ENCODE measurements at regions of chrX and their contacts with region 1.

Region 1: DNA sequence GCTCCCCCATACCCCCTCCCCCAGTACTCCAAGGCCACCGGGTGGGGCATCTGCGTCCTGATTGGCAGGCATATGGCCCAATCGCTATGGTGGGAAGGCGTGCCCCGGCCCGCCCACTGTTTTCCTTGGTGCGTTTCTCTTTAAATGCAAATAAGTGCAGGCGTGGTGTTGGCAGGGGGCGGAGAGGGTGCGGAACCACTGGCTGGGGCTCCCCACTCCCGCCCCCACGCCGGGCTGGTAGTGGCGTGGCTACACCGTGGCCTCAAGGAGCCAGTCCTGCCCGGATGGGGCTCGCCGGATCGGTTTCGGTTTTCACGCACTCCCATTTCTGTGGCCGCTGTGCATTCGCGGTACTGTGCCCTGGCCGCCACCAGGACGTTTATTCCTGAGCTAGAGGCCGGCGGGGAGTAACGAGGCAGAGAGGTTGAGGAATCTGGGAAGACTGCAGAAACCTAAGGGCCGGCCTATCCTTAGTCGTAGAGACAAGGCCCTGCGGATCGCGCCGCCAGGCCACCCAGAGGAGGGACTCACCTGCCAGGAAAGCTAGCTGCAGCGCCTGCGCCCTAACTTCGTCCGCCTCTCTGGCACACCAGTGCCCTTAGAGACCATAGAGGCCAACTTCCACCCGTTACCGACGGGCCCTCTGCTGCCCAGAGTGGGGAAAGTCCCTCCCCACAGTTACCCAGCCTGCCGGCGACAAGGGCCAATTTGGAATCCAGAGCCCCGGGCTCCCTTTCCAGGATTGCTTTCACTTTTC is 405 bp upstream of the AMER1 start:
- DNase-seq: peak; percentile 92 to 94
- H3K4me3 ChIP-seq: peak overlapping the region; percentile 52
- H3K4me3 Mint-ChIP-seq: peak overlapping the region; percentile 76
- H3K27ac Mint-ChIP-seq: peak overlapping the region; percentile 79
- H3K4me1 ChIP-seq: no peaks in the 10 kb centered on the region
- H3K4me1 Mint-ChIP-seq: no peaks in the 10 kb centered on the region
- H3K27me3 ChIP-seq: no peaks in the 10 kb centered on the region
- H3K27me3 Mint-ChIP-seq: no peaks in the 10 kb centered on the region
- CTCF ChIP-seq: peak in 1 of 2 experiments; percentile 29

Region 2: DNA sequence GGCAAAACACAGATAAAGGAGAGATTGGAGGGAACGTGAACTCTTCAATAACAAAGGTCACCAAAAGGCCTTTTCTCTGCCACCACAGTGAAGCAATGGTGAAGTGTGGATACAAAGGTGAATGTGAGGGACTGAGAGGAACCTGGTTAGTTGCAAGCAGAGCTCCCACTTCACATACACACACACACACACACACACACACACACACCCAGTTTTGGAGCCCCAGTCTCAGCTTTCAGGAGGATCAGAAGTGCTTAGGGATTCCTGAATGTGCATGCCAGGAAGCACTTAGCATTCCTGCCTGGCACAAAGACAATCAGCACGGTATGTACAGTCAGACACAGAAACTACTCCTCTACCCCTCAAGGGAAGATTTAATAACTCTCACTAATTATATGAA is 492.4 kb before region 1 on chrX:
- CTCF ChIA-PET with region 1: no interaction called
- POLR2A ChIA-PET with region 1: no interaction called
- intact Hi-C with region 1: no loop called
- DNase-seq: no peak
- H3K4me3 ChIP-seq: no peak overlapping the region
- H3K4me3 Mint-ChIP-seq: no peak overlapping the region
- H3K27ac Mint-ChIP-seq: no peak overlapping the region
- H3K4me1 ChIP-seq: no peaks in the 10 kb centered on the region
- H3K4me1 Mint-ChIP-seq: no peaks in the 10 kb centered on the region
- H3K27me3 ChIP-seq: no peaks in the 10 kb centered on the region
- H3K27me3 Mint-ChIP-seq: no peaks in the 10 kb centered on the region
- CTCF ChIP-seq: no peak

Region 3: DNA sequence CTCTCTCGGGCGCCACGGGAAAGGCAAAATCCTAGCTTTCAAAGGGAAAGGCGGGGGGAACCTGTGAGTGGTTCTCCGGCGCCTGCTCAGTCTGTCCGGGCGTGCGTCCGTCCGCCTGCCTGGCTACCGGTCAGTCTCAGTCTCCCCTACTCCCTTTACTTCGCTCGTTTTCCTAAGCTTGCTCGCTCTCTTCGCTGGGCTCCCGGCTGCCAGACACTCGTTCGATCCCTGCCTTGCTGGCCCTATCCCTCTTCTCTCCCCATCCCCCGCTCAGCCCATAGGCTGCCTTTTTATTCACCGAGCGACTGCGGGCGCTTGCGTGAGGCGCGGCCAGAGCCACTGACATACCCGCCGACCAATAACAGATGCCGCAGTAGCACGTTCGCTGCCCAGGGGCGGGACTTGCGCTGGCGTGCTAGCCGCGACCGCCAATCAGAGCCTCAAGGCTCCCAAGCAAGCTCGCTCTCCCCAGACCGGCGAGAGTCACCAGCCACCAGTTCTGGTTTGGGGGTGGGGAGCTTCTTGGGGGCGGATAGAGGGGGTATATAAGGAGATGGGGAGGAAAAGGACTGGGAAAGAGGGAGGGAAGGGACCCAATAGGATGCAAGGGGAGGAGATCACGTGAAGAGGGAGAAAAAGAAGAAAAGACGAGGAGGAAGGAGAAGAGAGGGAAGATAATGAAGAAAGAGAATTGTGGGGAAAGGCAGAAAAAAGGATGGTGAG is 450.9 kb before region 1 on chrX:
- CTCF ChIA-PET with region 1: interaction called, 3 read pairs
- POLR2A ChIA-PET with region 1: no interaction called
- intact Hi-C with region 1: loop called (anchors 1 kb)
- DNase-seq: peak; percentile 88 to 91
- H3K4me3 ChIP-seq: peak overlapping the region; percentile 70
- H3K4me3 Mint-ChIP-seq: peak overlapping the region; percentile 90
- H3K27ac Mint-ChIP-seq: peak overlapping the region; percentile 89
- H3K4me1 ChIP-seq: no peaks in the 10 kb centered on the region
- H3K4me1 Mint-ChIP-seq: peaks cover 6% of the 10 kb centered on the region
- H3K27me3 ChIP-seq: no peaks in the 10 kb centered on the region
- H3K27me3 Mint-ChIP-seq: peaks cover 8% of the 10 kb centered on the region
- CTCF ChIP-seq: no peak

Region 4: DNA sequence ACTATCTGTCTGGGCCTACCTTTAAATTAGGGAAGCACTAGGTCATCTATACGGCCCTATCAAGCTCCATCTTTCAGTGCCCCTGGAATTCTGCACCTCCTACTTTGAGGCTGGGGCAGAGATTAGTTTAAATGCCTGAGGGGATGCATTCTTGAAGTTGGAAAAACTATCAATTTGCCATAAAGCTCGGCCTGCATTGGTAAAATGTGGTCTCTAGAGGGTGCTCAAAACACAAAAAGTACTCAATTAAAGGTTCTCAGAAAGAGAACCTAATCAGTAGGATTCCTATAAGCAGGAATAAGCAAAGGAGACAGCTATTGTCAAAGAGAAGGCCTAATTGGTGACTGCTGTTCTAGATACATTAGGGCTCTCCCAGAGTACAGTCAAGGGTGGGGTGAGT is 112.2 kb before region 1 on chrX:
- CTCF ChIA-PET with region 1: interaction called, 12 read pairs
- POLR2A ChIA-PET with region 1: no interaction called
- intact Hi-C with region 1: loop called (anchors 1 kb)
- DNase-seq: peak in 1 of 2 experiments; percentile 14
- H3K4me3 ChIP-seq: no peak overlapping the region
- H3K4me3 Mint-ChIP-seq: no peak overlapping the region
- H3K27ac Mint-ChIP-seq: no peak overlapping the region
- H3K4me1 ChIP-seq: no peaks in the 10 kb centered on the region
- H3K4me1 Mint-ChIP-seq: no peaks in the 10 kb centered on the region
- H3K27me3 ChIP-seq: no peaks in the 10 kb centered on the region
- H3K27me3 Mint-ChIP-seq: no peaks in the 10 kb centered on the region
- CTCF ChIP-seq: peak; percentile 29 to 45

Region 5: DNA sequence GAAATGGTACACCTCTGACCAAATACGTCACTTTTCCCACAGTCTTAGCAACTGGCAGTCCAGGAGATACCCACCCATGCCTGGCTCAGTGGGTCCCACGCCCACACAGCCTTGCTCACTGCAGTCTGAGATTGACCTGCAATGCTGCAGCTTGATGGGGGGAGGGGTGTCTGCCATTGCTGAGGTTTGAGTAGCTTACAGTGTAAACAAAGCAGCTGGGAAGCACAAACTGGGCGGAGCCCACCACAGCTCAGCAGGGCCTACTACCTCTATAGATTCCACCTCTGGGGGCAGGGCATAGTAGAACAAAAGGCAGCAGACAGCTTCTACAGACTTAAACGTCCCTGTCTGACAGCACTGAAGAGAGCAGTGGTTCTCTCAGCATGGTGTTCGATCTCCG is 53.1 kb before region 1 on chrX:
- CTCF ChIA-PET with region 1: no interaction called
- POLR2A ChIA-PET with region 1: no interaction called
- intact Hi-C with region 1: loop called (anchors 10 kb)
- DNase-seq: peak; percentile 1 to 36
- H3K4me3 ChIP-seq: no peak overlapping the region
- H3K4me3 Mint-ChIP-seq: no peak overlapping the region
- H3K27ac Mint-ChIP-seq: no peak overlapping the region
- H3K4me1 ChIP-seq: no peaks in the 10 kb centered on the region
- H3K4me1 Mint-ChIP-seq: no peaks in the 10 kb centered on the region
- H3K27me3 ChIP-seq: no peaks in the 10 kb centered on the region
- H3K27me3 Mint-ChIP-seq: no peaks in the 10 kb centered on the region
- CTCF ChIP-seq: no peak

Region 6: DNA sequence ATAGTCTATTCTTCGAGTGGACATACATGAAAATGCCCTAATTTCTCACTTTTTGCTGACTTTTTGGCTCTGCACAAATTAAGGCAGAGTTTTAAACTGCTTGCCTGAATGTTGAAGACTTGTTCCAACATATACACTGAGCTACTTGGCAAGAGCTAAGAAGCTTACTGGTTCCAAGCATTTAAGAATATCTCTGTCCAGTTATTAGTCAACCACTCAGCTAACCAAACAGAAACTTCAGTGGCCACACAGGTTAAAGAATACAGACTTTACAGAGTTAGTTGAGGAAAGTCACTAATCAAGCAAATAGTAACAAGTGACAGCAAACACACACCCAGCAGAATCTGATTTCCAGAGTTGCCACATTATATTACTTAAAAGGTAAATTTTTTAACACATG is 35.9 kb before region 1 on chrX:
- CTCF ChIA-PET with region 1: no interaction called
- POLR2A ChIA-PET with region 1: no interaction called
- intact Hi-C with region 1: loop called (anchors 5 kb)
- DNase-seq: no peak
- H3K4me3 ChIP-seq: no peak overlapping the region
- H3K4me3 Mint-ChIP-seq: no peak overlapping the region
- H3K27ac Mint-ChIP-seq: no peak overlapping the region
- H3K4me1 ChIP-seq: no peaks in the 10 kb centered on the region
- H3K4me1 Mint-ChIP-seq: no peaks in the 10 kb centered on the region
- H3K27me3 ChIP-seq: no peaks in the 10 kb centered on the region
- H3K27me3 Mint-ChIP-seq: no peaks in the 10 kb centered on the region
- CTCF ChIP-seq: no peak

Region 7: GRCh38 chrX:64186974-64187761 is 18.7 kb before region 1 on chrX:
- CTCF ChIA-PET with region 1: interaction called, 6 read pairs
- POLR2A ChIA-PET with region 1: interaction called, 7 read pairs
- intact Hi-C with region 1: loop called (anchors 1 kb)
- DNase-seq: no peak
- H3K4me3 ChIP-seq: no peak overlapping the region
- H3K4me3 Mint-ChIP-seq: no peak overlapping the region
- H3K27ac Mint-ChIP-seq: no peak overlapping the region
- H3K4me1 ChIP-seq: peaks cover 7% of the 10 kb centered on the region
- H3K4me1 Mint-ChIP-seq: no peaks in the 10 kb centered on the region
- H3K27me3 ChIP-seq: no peaks in the 10 kb centered on the region
- H3K27me3 Mint-ChIP-seq: no peaks in the 10 kb centered on the region
- CTCF ChIP-seq: no peak

Region 8: DNA sequence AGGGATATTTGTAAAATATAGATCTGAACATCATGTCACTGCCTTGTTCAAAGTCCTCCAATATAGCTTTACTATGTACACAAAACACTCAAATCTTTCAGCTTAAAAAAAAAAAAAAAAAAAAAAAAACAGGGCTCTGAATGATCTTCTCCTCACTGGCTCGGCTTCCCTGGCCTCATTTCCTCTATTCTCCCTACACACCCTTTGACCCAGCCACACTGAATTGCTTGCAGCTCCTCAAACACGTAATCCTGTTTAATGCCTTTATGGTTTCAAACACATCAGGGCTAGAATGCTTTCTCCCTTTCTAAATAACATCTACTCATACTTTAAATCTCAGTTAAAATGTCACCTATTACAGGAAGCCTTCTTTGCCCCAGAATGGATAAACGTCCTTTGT is 128.6 kb after region 1 on chrX:
- CTCF ChIA-PET with region 1: no interaction called
- POLR2A ChIA-PET with region 1: no interaction called
- intact Hi-C with region 1: no loop called
- DNase-seq: peak in 1 of 2 experiments; percentile 3
- H3K4me3 ChIP-seq: no peak overlapping the region
- H3K4me3 Mint-ChIP-seq: no peak overlapping the region
- H3K27ac Mint-ChIP-seq: no peak overlapping the region
- H3K4me1 ChIP-seq: no peaks in the 10 kb centered on the region
- H3K4me1 Mint-ChIP-seq: no peaks in the 10 kb centered on the region
- H3K27me3 ChIP-seq: no peaks in the 10 kb centered on the region
- H3K27me3 Mint-ChIP-seq: no peaks in the 10 kb centered on the region
- CTCF ChIP-seq: no peak

Region 9: DNA sequence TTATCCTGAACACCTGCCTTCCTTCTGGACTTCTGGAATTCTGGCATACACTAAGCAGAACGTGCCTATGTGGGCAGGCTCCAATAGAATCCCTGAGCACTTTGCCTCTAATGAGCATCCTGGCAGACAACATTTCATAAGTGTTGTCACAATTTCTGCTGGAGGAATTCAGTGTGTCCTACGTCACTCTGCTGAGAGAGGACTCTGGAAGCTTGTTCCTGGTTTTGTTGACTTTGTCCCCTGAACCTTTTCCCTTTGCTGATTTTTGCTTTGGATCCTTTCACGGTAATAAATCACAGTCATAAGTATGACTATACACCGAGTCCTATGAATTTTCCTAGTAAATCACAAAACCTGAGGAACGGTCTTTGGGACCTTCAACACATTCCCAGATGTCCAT is 146.2 kb after region 1 on chrX:
- CTCF ChIA-PET with region 1: no interaction called
- POLR2A ChIA-PET with region 1: no interaction called
- intact Hi-C with region 1: no loop called
- DNase-seq: no peak
- H3K4me3 ChIP-seq: no peak overlapping the region
- H3K4me3 Mint-ChIP-seq: no peak overlapping the region
- H3K27ac Mint-ChIP-seq: no peak overlapping the region
- H3K4me1 ChIP-seq: no peaks in the 10 kb centered on the region
- H3K4me1 Mint-ChIP-seq: no peaks in the 10 kb centered on the region
- H3K27me3 ChIP-seq: no peaks in the 10 kb centered on the region
- H3K27me3 Mint-ChIP-seq: no peaks in the 10 kb centered on the region
- CTCF ChIP-seq: no peak

Measured in Caco-2 (cell line).